ENCODE measurements at regions of chr9 and their contacts with region 1.

Region 1: DNA sequence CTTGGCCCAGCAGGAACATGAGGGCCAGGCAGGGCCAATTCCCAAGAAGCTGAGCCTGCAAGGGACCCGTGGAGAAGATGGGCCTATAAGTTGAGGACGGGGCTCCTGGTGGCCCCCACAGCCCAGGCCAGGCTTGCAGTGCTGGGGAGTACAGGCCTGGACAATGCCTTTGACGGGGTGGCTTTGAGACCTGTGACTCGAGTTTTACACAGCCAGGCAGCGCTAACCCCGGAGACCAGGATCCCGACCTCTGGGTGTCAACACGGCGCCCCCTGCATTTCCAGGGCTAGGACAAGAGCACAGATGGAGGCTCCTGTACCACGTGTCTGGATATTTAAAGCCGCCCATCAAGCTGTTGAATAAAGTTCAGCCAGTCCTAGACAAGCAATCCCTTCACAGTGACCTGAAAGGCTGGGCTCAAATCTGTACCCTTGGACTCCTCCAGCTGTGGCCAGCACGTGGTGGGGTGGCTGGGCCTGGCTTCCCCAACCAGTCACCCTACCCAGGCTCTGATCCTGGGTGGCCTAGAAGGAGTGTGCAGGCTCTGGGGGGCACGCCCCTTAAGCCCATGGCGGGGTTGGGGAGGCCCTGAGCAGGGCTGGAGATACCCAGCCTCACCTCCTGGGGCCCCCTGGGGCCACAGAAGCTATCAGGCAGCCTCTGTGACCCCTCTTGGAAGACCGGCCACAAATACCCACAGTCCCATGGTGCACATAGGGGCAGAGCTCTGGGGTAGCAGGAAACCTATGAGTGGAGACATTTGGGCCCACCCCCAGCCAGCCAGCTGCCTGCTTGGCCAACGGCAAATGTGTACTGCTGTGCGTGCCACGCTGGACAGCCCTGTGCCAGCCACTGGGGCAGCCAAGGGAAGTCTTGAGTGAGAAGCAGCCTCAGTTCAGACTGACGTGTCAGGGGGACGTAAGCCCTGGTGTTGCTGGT is 88.7 kb downstream of the NTNG2 start:
- DNase-seq: no peak
- ATAC-seq: no peak

Region 2: GRCh38 chr9:131762356-131762932 is 488.1 kb before region 1 on chr9:
- intact Hi-C with region 1: loop called in 1 of 2 experiments (anchors 5 kb)
- DNase-seq: peak; percentile 33 to 75
- ATAC-seq: peak; percentile 97

Region 3: GRCh38 chr9:132546148-132547051 is 295.8 kb after region 1 on chr9:
- intact Hi-C with region 1: no loop called
- DNase-seq: peak in 1 of 2 donors; percentile 12
- ATAC-seq: peak; percentile 50